ENCODE measurements at regions of chr1 and their contacts with region 1.

Region 1: DNA sequence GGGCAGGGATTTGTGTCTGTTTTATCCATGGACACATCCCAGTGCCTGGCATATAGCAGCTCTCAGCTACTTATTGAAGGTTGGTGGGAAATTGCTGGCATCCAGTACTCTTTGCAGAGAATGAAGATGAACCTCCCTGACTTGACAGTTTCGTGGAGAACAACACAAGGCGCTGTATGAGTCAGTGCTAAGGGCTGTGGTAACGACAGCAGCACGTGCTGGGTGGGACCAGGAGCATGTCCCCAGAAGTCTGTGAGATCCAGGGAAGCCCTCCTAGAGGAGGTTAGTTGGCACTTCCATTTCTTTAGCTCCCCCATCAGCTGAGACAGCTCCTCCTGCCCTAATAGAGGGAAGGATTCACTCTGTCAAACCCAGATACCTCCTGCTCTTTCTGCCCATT is 25.9 kb upstream of the IL19 start:
- DNase-seq: peak; percentile 45
- ATAC-seq: peak; percentile 50
- H3K4me3 Mint-ChIP-seq: no peak overlapping the region
- H3K27ac Mint-ChIP-seq: no peak overlapping the region
- H3K4me1 Mint-ChIP-seq: peaks cover 51% of the 10 kb centered on the region
- H3K27me3 Mint-ChIP-seq: peaks cover 3% of the 10 kb centered on the region

Region 2: DNA sequence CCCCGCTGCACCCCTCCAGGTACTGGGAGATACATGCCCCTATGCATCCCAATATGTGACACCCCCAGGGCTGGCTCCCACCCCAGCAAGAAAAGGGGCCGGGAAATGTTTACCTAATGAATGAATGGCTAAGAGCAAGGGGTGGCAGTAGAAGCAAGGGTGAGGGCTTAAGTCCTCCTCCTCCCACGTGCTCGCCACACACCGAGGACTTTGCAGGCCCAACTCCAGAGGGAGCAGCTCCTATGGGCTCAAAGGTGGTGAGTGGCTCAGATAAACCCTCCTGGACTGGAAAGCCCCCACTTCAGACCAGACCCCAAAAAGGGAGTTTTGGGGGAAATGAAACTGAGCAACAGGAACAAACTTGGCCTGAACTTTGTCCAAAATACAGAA is 1075.7 kb before region 1 on chr1:
- CTCF ChIA-PET with region 1: no interaction called
- POLR2A ChIA-PET with region 1: no interaction called
- intact Hi-C with region 1: no loop called
- DNase-seq: no peak
- ATAC-seq: no peak
- H3K4me3 Mint-ChIP-seq: no peak overlapping the region
- H3K27ac Mint-ChIP-seq: no peak overlapping the region
- H3K4me1 Mint-ChIP-seq: no peaks in the 10 kb centered on the region
- H3K27me3 Mint-ChIP-seq: peaks cover 8% of the 10 kb centered on the region

Region 3: DNA sequence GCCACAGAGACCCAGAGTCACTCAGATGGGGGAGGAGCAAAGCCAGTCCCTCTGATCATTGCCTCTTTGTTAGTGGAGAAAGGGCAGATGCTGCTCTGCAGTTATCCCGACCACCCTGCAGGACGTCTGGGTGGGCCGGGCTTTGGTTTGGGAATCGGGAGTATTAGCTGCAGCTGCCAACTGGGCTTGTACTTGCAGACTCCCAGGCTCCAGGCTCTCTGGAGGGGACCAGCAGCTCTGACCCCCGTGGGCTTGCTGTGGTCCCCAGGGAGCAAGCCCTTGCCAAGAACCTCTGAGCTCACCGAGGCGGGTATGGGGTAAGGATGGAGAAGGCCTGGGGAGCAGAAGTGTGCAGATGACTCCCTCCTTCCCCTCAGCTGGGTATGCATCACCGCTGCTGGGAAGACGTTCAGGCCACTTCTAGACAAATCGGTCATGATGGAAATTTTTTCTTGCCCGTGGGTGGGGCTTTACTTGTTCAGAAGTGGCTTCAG is 38.3 kb before region 1 on chr1:
- CTCF ChIA-PET with region 1: no interaction called
- POLR2A ChIA-PET with region 1: no interaction called
- intact Hi-C with region 1: loop called in 1 of 2 experiments (anchors 1 kb)
- DNase-seq: peak; percentile 88
- ATAC-seq: peak; percentile 74
- H3K4me3 Mint-ChIP-seq: no peak overlapping the region
- H3K27ac Mint-ChIP-seq: peak overlapping the region; percentile 63
- H3K4me1 Mint-ChIP-seq: peaks cover 86% of the 10 kb centered on the region
- H3K27me3 Mint-ChIP-seq: no peaks in the 10 kb centered on the region

Region 4: DNA sequence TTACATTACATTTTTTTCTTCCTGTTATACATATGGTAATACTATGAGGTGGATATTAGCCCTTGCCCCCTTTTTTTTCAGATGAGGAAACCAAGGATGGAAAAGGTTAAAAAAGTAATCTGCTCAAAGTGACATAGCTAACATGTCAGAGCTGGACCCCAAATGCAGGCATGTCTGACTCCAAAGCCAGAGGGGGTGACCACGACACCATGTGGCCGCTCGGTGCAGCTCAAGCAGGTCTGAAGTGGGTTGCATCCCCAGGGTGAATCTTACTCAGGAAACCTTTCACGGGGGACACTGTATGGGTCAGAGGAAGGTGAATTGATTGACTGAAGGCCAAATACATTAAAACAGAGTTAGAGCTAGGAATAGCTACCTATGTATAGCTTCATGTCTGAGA is 1131.4 kb after region 1 on chr1:
- CTCF ChIA-PET with region 1: no interaction called
- POLR2A ChIA-PET with region 1: no interaction called
- intact Hi-C with region 1: no loop called
- DNase-seq: no peak
- ATAC-seq: no peak
- H3K4me3 Mint-ChIP-seq: no peak overlapping the region
- H3K27ac Mint-ChIP-seq: no peak overlapping the region
- H3K4me1 Mint-ChIP-seq: peaks cover 43% of the 10 kb centered on the region
- H3K27me3 Mint-ChIP-seq: no peaks in the 10 kb centered on the region